ENCODE measurements at regions of chr19 and their contacts with region 1.

Region 1: GRCh38 chr19:35931161-35931873 is 4.9 kb upstream of the LRFN3 start:
- DNase-seq: peak; percentile 99 to 100
- ATAC-seq: peak; percentile 98

Region 2: DNA sequence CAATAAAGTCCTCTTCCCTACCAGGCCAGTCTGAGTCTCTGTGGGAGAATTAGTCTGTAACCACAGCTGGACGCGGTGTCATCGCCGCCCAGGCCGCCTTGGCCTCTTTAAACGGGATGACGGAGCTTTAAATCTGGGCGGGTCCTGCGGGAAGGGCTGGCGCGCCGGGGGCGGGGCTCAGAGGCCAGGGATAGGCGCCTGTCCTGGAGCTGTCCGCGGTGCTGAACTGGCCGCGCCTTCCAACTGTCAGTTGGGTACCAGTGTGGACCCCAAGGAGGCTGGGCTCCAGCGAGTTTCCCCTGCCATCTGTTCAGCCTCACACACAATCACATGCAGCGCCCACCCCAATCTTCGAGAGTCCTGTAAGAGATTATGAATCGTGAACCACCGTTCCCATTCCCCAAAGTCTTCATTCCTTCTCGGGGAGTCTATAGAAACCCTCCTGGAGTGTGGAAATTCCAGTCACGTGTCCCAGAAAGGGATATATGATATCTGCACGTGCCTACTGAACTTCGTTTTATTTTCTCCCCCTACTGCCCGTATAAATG is 51.5 kb before region 1 on chr19:
- intact Hi-C with region 1: loop called in 1 of 2 experiments (anchors 5 kb)
- DNase-seq: peak; percentile 86 to 95
- ATAC-seq: peak; percentile 97

Region 3: DNA sequence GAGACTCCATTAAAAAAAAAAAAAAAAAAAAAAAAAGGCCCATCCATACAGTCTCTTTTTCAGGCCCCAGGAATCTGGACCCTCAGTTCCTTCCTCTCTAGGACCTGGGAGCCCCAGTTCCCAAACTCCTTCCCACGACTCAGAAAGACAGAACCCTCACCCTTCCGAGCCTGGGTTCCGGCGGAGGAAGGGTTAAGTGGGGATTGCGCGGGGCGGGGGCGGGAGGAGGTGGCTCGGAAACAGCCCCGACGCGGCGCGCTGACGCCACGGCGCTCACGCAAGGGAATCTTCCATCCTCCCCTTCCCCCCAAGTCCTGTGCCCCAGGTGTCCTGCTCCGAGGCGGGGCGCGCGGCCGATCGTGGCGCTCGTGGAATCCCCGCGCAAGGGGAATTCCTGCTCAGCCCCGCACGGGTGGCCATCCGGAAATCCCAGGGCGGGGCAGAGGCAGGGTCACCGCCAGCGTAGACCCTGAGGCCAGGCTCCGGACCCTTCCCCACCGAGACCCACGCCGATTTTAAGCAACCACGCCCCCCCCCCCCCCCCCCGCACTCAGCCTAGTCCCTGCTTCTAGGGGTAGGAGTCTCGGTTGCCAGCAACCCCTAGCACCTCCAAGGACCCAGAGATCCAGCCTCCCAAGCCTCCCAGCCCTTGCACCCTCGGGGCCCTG is 31.6 kb before region 1 on chr19:
- intact Hi-C with region 1: loop called in 1 of 2 experiments (anchors 2 kb)
- DNase-seq: peak; percentile 87 to 91
- ATAC-seq: peak; percentile 92

Measured in left colon (tissue), 2 donors.